ENCODE measurements at regions of chr7 and their contacts with region 1.

Region 1: GRCh38 chr7:135281363-135281949 is 47.8 kb downstream of the STRA8 start:
- DNase-seq: peak; percentile 61 to 84 (median 70)
- ATAC-seq: peak; percentile 99 to 100 (median 100)
- H3K4me3 ChIP-seq: no peak overlapping the region
- H3K27ac ChIP-seq: no peak overlapping the region
- H3K4me1 ChIP-seq: no peaks in the 10 kb centered on the region
- H3K27me3 ChIP-seq: no peaks in the 10 kb centered on the region
- CTCF ChIP-seq: peak; percentile 96 to 99 (median 98)
- POLR2A ChIP-seq: no peak

Region 2: GRCh38 chr7:135129580-135129979 is 151.9 kb before region 1 on chr7:
- intact Hi-C with region 1: no loop called
- DNase-seq: no peak
- ATAC-seq: no peak
- H3K4me3 ChIP-seq: no peak overlapping the region
- H3K27ac ChIP-seq: no peak overlapping the region
- H3K4me1 ChIP-seq: no peaks in the 10 kb centered on the region
- H3K27me3 ChIP-seq: no peaks in the 10 kb centered on the region
- CTCF ChIP-seq: no peak
- POLR2A ChIP-seq: no peak

Region 3: GRCh38 chr7:135320277-135320676 is 38.8 kb after region 1 on chr7:
- intact Hi-C with region 1: no loop called
- DNase-seq: peak; percentile 79 to 81 (median 81)
- ATAC-seq: peak; percentile 80 to 98 (median 91)
- H3K4me3 ChIP-seq: no peak overlapping the region
- H3K27ac ChIP-seq: no peak overlapping the region
- H3K4me1 ChIP-seq: no peaks in the 10 kb centered on the region
- H3K27me3 ChIP-seq: no peaks in the 10 kb centered on the region
- CTCF ChIP-seq: no peak
- POLR2A ChIP-seq: no peak

Region 4: DNA sequence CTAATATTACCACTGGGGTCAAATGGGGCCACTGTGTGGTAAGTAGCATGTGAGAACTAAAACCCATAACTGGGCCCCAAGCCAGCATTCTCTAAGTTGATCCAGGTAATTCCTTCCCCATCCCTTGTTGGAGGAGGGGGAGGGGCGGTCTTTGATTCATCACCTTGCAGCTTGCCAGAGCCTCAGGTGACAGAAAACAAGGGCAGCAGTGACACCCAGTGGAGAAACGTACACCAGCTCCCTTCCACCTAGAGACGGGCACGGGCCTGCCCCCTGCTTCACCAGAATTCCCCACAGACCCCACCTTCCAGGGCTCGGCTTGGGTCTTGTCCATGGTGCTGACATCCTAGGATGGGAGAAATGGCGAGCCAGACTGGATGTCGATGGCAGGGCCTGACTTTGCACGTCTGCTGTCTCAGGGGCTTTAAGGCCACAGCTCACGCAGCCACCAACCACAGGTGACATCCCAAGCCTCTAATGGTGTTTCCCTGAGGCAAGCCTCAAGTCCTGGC is 54.2 kb after region 1 on chr7:
- intact Hi-C with region 1: loop called in 1 of 2 experiments (anchors 10 kb)
- DNase-seq: peak; percentile 50 to 65 (median 60)
- ATAC-seq: peak; percentile 80 to 98 (median 88)
- H3K4me3 ChIP-seq: no peak overlapping the region
- H3K27ac ChIP-seq: no peak overlapping the region
- H3K4me1 ChIP-seq: no peaks in the 10 kb centered on the region
- H3K27me3 ChIP-seq: no peaks in the 10 kb centered on the region
- CTCF ChIP-seq: peak; percentile 41 to 61 (median 52)
- POLR2A ChIP-seq: no peak

Region 5: DNA sequence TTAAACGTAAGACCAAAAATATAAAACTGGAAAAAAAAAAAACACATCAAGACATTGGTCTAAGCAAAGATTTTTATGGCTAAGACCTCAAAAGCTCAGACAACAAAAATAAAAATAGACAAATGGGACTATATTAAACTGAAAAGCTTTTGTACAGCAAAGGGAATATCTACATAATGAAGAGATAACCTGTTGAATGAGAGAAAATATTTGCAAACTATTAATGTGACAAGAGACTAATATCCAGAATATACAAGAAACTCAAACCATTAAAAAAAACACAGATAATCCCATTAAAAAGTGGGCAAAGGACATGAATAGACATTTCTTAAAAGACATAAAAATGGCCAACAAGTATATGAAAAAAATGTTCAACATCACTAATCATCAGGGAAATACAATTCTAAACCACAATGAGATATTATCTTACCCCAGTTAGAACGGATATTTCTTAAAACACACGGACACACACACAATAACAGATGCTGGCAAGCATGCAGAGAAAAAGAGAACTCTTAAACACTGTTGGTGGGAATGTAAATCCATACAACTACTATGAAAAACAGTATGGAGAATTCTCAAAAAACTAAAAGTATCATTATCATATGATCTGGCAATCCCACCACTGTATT is 199.6 kb after region 1 on chr7:
- intact Hi-C with region 1: no loop called
- DNase-seq: no peak
- ATAC-seq: no peak
- H3K4me3 ChIP-seq: no peak overlapping the region
- H3K27ac ChIP-seq: no peak overlapping the region
- H3K4me1 ChIP-seq: no peaks in the 10 kb centered on the region
- H3K27me3 ChIP-seq: no peaks in the 10 kb centered on the region
- CTCF ChIP-seq: no peak
- POLR2A ChIP-seq: no peak